ENCODE measurements at regions of chr1 and their contacts with region 1.

Region 1: GRCh38 chr1:9573723-9574122 is 15.0 kb upstream of the TMEM201 start:
- DNase-seq: no peak
- H3K4me3 ChIP-seq: no peak overlapping the region
- H3K27ac ChIP-seq: no peak overlapping the region
- H3K4me1 ChIP-seq: no peaks in the 10 kb centered on the region
- H3K27me3 ChIP-seq: no peaks in the 10 kb centered on the region
- CTCF ChIP-seq: peak; percentile 15 to 22
- POLR2A ChIP-seq: no peak

Region 2: GRCh38 chr1:9270290-9270883 is 303.3 kb before region 1 on chr1:
- CTCF ChIA-PET with region 1: interaction called, 14 read pairs
- POLR2A ChIA-PET with region 1: no interaction called
- dilution Hi-C with region 1: no loop called
- intact Hi-C with region 1: loop called (anchors 5 kb)
- DNase-seq: no peak
- H3K4me3 ChIP-seq: no peak overlapping the region
- H3K27ac ChIP-seq: no peak overlapping the region
- H3K4me1 ChIP-seq: peaks cover 4% of the 10 kb centered on the region
- H3K27me3 ChIP-seq: no peaks in the 10 kb centered on the region
- CTCF ChIP-seq: no peak
- POLR2A ChIP-seq: no peak

Region 3: DNA sequence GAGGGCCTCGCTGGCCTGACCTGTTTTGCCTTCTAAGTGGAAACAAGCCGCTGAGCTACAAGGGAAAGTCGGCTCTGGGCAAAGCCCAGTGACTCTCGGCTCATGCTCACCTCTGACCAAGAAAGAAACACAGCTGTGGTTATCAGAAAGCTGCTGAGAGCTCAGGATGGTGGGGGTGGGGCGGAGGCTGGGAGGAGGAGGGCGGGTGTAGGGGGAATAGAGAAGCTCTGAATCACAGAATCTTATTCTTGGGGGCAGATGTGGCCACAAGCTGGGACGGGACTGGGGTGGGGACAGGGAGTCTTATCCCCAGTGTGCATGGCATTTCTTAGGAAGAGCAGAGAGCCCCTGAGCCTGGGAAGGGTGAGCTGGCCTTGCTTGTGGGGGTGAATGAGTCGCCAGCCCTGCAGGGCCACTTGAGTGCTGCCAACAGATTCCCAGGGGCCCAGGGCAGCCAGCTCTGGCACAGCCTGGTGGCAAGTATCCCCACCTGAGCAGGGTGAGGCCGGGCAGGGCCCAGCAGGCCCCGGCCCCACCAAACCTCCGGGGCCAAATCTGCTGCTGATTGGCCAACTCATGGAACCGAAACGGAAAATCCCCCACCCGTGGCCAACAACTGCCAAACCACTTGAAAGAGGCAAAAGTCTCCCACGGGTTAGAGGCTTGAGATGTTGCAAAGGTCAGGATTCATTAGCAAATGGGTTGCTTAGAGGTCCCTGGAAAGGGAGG is 160.4 kb before region 1 on chr1:
- CTCF ChIA-PET with region 1: no interaction called
- POLR2A ChIA-PET with region 1: no interaction called
- dilution Hi-C with region 1: no loop called
- intact Hi-C with region 1: no loop called
- DNase-seq: peak; percentile 92
- H3K4me3 ChIP-seq: no peak overlapping the region
- H3K27ac ChIP-seq: peak overlapping the region; percentile 80
- H3K4me1 ChIP-seq: peaks cover 20% of the 10 kb centered on the region
- H3K27me3 ChIP-seq: no peaks in the 10 kb centered on the region
- CTCF ChIP-seq: no peak
- POLR2A ChIP-seq: no peak

Region 4: DNA sequence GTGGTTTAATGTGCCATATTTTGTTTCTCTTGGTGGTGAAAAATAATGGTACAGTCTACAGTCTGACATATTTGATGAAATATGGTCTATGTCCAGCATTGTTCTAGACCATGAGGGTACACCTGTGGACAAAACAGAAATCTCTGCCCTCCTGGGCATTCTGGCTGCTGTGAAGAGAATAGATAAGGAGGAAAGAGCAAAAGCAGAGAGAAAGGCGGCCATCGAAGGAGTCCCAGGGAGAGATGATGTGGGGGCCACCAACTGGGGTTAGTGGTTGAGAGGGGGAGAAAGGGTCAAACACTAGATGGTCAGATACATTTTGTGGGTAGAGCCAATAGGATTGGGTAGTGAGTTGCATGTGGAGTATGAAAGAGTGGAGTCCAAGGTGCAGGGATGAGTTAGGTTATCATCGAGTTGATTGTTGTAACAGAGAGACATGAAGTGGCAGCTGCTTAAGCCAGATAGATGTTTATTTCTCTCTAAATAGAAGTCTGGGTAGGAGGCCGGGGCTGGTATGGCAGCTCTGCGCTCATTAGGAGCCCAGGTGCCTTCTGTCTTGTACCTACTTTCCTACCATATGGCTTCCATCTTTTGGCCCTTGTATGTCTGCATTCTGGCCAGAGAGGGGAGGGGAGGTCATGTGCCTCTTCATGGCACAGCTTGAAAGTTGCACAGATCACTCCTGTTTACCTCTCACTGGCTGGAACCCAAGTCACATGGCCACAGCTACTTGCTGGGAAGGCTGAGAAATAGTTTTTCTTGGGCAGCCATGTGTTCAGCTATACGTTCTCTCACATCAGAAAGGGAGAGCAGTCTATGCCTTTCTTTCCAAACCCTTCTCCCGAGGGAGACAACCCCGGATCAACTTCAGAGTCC is 472.0 kb after region 1 on chr1:
- CTCF ChIA-PET with region 1: no interaction called
- POLR2A ChIA-PET with region 1: no interaction called
- dilution Hi-C with region 1: no loop called
- intact Hi-C with region 1: no loop called
- DNase-seq: no peak
- H3K4me3 ChIP-seq: no peak overlapping the region
- H3K27ac ChIP-seq: no peak overlapping the region
- H3K4me1 ChIP-seq: no peaks in the 10 kb centered on the region
- H3K27me3 ChIP-seq: no peaks in the 10 kb centered on the region
- CTCF ChIP-seq: no peak
- POLR2A ChIP-seq: no peak